ENCODE measurements at regions of chr2 and their contacts with region 1.

Region 1: GRCh38 chr2:27409321-27410073 is at the start of gene PPM1G:
- DNase-seq: peak; percentile 88
- ATAC-seq: peak; percentile 97
- H3K4me3 ChIP-seq: peak within 1 kb of the TSS; percentile 63
- H3K27ac ChIP-seq: peak within 1 kb of the TSS; percentile 71
- H3K4me1 ChIP-seq: 0 out of 2 replicates have a peak, but pooled peaks cover 2% of the 10 kb centered on the region
- H3K27me3 ChIP-seq: no peaks in the 10 kb centered on the region
- CTCF ChIP-seq: no peak
- POLR2A ChIP-seq: peak; percentile 51; the same call in 1 of the 2 replicates
- RAD21 ChIP-seq: no peak
- total RNA-seq, gene PPM1G: 95.9 and 99.2 TPM in 2 replicates

Region 2: GRCh38 chr2:27356382-27357181 is 52.9 kb before region 1 on chr2 and contains the start of gene GTF3C2:
- CTCF ChIA-PET with region 1: no interaction called
- POLR2A ChIA-PET with region 1: no interaction called
- dilution Hi-C with region 1: no loop called
- in situ Hi-C with region 1: no loop called
- intact Hi-C with region 1: no loop called
- DNase-seq: peak; percentile 97
- ATAC-seq: peak; percentile 92
- H3K4me3 ChIP-seq: peak within 1 kb of the TSS; percentile 88
- H3K27ac ChIP-seq: peak within 1 kb of the TSS; percentile 95
- H3K4me1 ChIP-seq: peaks cover 8% of the 10 kb centered on the region
- H3K27me3 ChIP-seq: no peaks in the 10 kb centered on the region
- CTCF ChIP-seq: 0 out of 2 replicates have a peak, but pooled peaks have one; percentile 0
- POLR2A ChIP-seq: 0 out of 2 replicates have a peak, but pooled peaks have one; percentile 91
- RAD21 ChIP-seq: no peak
- total RNA-seq, gene GTF3C2: 23.1 and 25.5 TPM in 2 replicates

Region 3: GRCh38 chr2:27428213-27428977 is 18.9 kb after region 1 on chr2 and contains the start of gene NRBP1:
- CTCF ChIA-PET with region 1: interaction called, 6 read pairs
- POLR2A ChIA-PET with region 1: interaction called, 3 read pairs
- dilution Hi-C with region 1: no loop called
- in situ Hi-C with region 1: no loop called
- intact Hi-C with region 1: loop called (anchors 1 kb)
- DNase-seq: peak; percentile 88
- ATAC-seq: peak; percentile 92
- H3K4me3 ChIP-seq: peak within 1 kb of the TSS; percentile 81
- H3K27ac ChIP-seq: peak within 1 kb of the TSS; percentile 94
- H3K4me1 ChIP-seq: peaks cover 8% of the 10 kb centered on the region
- H3K27me3 ChIP-seq: no peaks in the 10 kb centered on the region
- CTCF ChIP-seq: no peak
- POLR2A ChIP-seq: peak; percentile 93
- RAD21 ChIP-seq: no peak
- total RNA-seq, gene NRBP1: 107 and 120 TPM in 2 replicates

Region 4: GRCh38 chr2:27628767-27629709 is 219.5 kb after region 1 on chr2 and contains the starts of genes CCDC121 and GPN1:
- CTCF ChIA-PET with region 1: no interaction called
- POLR2A ChIA-PET with region 1: no interaction called
- dilution Hi-C with region 1: no loop called
- in situ Hi-C with region 1: no loop called
- intact Hi-C with region 1: loop called (anchors 10 kb)
- DNase-seq: peak; percentile 94
- ATAC-seq: peak; percentile 97
- H3K4me3 ChIP-seq: peak within 1 kb of the TSS; percentile 94
- H3K27ac ChIP-seq: peak within 1 kb of the TSS; percentile 83
- H3K4me1 ChIP-seq: peaks cover 3% of the 10 kb centered on the region; the same call in 1 of the 2 replicates
- H3K27me3 ChIP-seq: no peaks in the 10 kb centered on the region
- CTCF ChIP-seq: no peak
- POLR2A ChIP-seq: peak; percentile 98
- RAD21 ChIP-seq: no peak
- total RNA-seq, gene CCDC121: 2.0 and 2.2 TPM in 2 replicates
- total RNA-seq, gene GPN1: 53.0 and 63.8 TPM in 2 replicates

Region 5: DNA sequence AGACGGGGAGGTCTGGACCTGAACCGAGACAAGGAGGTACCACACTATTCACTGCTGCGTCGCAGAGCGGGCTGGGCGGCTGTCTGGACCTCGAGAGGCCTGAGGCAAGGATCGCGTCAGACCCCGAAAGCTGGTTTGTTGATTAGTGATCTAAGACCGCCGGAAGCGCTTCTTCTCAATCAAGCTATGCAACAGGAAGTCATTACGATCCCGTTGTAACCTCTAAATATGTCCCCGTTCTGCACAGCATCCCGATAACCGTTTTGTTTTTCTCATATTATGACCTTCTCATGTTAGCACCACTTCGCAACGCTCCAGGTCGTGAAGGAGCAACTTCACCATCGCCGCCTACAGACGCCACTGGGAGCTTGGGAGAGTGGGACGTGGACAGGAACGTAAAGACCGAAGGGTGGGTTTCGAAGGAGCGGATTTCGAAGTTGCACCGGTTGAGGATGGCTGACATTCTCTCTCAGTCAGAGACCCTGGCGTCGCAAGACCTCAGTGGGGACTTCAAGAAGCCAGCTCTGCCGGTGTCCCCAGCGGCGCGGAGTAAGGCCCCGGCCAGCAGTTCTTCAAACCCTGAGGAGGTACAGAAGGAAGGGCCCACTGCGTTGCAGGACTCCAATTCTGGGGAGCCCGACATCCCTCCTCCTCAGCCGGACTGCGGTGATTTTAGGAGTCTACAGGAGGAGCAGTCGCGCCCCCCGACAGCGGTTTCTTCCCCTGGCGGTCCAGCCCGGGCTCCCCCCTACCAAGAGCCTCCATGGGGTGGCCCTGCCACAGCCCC is 254.2 kb after region 1 on chr2 and contains the starts of genes SLC4A1AP and SUPT7L:
- CTCF ChIA-PET with region 1: no interaction called
- POLR2A ChIA-PET with region 1: no interaction called
- dilution Hi-C with region 1: no loop called
- in situ Hi-C with region 1: no loop called
- intact Hi-C with region 1: loop called (anchors 2 kb)
- DNase-seq: peak; percentile 89
- ATAC-seq: peak; percentile 90
- H3K4me3 ChIP-seq: peak within 1 kb of the TSS; percentile 85
- H3K27ac ChIP-seq: peak within 1 kb of the TSS; percentile 86
- H3K4me1 ChIP-seq: peaks cover 5% of the 10 kb centered on the region
- H3K27me3 ChIP-seq: no peaks in the 10 kb centered on the region
- CTCF ChIP-seq: no peak
- POLR2A ChIP-seq: peak; percentile 58; the same call in 1 of the 2 replicates
- RAD21 ChIP-seq: no peak
- total RNA-seq, gene SLC4A1AP: 11.7 and 17.8 TPM in 2 replicates
- total RNA-seq, gene SUPT7L: 16.7 and 23.1 TPM in 2 replicates

Region 6: DNA sequence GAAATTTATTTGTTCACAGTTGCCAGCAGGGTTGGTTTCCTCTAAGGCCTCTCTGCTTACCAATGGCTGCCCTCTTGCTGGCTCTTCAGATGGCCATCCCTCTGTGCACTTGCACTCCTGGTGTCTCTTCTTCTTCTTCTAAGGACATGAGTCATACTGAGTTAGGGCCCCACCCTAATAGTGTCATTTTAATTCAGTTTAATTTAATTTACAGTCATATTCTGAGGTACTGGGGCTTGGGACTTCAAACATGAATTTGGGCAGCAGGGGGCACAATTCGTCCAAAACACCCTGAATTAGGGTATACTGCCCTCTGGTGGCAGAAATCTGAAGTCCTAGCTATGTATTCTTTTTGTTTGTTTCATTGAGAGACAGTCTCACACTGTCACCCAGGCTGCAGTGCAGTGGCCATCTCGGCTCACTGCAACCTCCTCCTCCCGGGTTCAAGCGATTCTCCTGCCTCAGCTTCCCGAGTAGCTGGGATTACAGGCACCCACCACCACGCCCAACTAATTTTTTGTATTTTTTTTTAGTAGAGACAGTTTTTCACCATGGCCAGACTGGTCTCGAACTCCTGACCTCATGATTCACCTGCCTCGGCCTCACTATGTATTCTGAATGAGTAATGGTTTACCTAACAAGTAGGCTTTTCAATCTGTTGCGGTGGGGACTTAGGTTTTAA is 274.0 kb after region 1 on chr2:
- CTCF ChIA-PET with region 1: interaction called, 6 read pairs
- POLR2A ChIA-PET with region 1: no interaction called
- dilution Hi-C with region 1: no loop called
- in situ Hi-C with region 1: no loop called
- intact Hi-C with region 1: loop called (anchors 5 kb)
- DNase-seq: peak; percentile 90
- ATAC-seq: peak; percentile 69
- H3K4me3 ChIP-seq: no peak overlapping the region
- H3K27ac ChIP-seq: peak overlapping the region; percentile 52; the same call in 1 of the 2 replicates
- H3K4me1 ChIP-seq: peaks cover 10% of the 10 kb centered on the region
- H3K27me3 ChIP-seq: no peaks in the 10 kb centered on the region
- CTCF ChIP-seq: peak; percentile 99
- POLR2A ChIP-seq: no peak
- RAD21 ChIP-seq: peak; percentile 75